ENCODE measurements at regions of chr6 and their contacts with region 1.

Region 1: DNA sequence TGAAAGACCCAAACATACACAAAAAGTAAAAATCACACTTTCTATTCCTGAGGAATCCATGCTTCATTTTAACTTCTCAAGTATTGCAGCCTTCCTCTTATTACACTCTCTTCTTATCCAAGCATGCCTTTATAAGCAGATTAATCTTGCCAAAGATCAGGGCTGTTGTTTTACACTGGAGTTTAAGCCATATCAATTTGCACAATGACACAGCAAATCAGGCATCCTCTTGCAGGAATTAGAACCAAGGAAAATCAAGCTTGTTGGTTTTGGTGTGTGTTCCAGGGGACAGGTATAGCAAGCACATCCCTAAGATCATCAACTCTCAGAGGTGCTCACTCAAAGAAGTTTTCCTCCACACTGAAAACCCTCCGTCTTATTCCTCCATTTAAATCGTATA is 69.5 kb downstream of the CYP39A1 start:
- DNase-seq: no peak
- H3K4me3 ChIP-seq: no peak overlapping the region
- H3K27ac ChIP-seq: peak overlapping the region; percentile 60 to 62
- H3K4me1 ChIP-seq: peaks cover 0 to 28% of the 10 kb centered on the region in 2 donors
- H3K27me3 ChIP-seq: no peaks in the 10 kb centered on the region
- CTCF ChIP-seq: no peak

Region 2: DNA sequence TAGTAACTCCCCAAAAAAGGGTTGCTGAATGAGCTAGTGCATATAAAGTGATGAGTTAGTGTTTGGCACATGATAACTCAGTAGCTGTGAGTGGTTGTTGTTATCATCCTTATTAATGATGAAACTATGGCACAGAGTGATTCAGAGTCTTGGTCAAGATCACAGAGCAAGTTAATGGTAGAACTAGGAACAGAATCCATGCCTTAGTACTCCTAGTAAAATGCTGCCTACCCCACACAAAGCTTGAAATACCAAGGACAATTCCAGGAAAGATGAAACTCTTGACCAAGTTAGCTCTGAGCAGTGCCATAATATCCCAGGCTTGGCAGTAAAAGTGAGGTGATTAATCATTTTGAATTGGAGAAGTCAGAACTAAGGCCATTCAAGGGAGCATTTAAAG is 303.2 kb before region 1 on chr6:
- intact Hi-C with region 1: no loop called
- DNase-seq: no peak
- H3K4me3 ChIP-seq: no peak overlapping the region
- H3K27ac ChIP-seq: no peak overlapping the region
- H3K4me1 ChIP-seq: peaks cover 0 to 15% of the 10 kb centered on the region in 2 donors
- H3K27me3 ChIP-seq: no peaks in the 10 kb centered on the region
- CTCF ChIP-seq: no peak

Region 3: DNA sequence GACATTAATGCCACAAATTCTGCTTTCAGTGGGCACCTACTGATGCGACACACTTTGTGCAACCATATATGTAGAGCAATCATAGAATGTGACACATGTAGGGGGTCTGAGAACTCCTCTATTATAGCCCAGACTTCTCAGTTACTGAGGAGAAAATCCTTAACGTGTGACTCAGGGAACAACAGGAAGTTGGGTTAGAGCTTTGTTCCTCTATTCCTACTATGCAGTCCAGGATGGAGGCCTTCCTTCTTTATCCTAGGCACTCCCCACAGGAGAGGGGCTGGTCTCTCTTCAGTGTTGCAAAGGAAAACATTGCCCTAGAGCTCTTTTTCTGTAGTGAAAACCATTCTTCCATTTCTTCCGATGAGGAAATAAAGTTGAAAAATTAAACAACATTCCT is 52.2 kb before region 1 on chr6:
- intact Hi-C with region 1: loop called (anchors 5 kb)
- DNase-seq: no peak
- H3K4me3 ChIP-seq: no peak overlapping the region
- H3K27ac ChIP-seq: peak overlapping the region; percentile 10 to 46
- H3K4me1 ChIP-seq: peaks cover 4% of the 10 kb centered on the region in 2 donors
- H3K27me3 ChIP-seq: no peaks in the 10 kb centered on the region
- CTCF ChIP-seq: no peak

Region 4: DNA sequence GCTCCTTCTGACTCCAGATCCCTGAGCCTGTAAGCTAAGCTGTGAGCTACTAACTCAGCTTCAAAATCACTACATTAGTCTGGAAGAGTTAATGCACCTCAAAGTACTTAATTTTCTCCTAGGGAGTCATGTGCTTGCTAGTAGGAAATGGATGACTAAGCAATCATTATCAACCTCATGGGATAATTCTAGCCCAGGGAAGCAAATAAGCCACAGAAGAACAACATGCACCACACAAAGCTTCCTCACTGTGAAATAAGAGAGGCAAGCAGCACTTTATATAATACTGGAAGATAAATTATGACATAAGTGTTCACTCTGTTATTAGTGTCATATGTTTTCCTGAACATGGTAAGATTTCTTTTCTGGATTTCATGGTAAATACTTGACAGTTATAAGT is 33.9 kb before region 1 on chr6:
- intact Hi-C with region 1: loop called (anchors 5 kb)
- DNase-seq: no peak
- H3K4me3 ChIP-seq: no peak overlapping the region
- H3K27ac ChIP-seq: no peak overlapping the region
- H3K4me1 ChIP-seq: peaks cover 0 to 4% of the 10 kb centered on the region in 2 donors
- H3K27me3 ChIP-seq: no peaks in the 10 kb centered on the region
- CTCF ChIP-seq: no peak